MCF 10A (cell line): ENCODE measurements at regions of chr7 and their contacts with region 1.

Region 1: GRCh38 chr7:44797329-44798251 is 1.1 kb downstream of the PPIA start:
- DNase-seq: peak; percentile 90
- H3K4me3 Mint-ChIP-seq: peak overlapping the region; percentile 87
- H3K27ac Mint-ChIP-seq: peak overlapping the region; percentile 98
- H3K4me1 Mint-ChIP-seq: peaks cover 6% of the 10 kb centered on the region
- H3K27me3 Mint-ChIP-seq: no peaks in the 10 kb centered on the region
- CTCF ChIP-seq: peak; percentile 42

Region 2: DNA sequence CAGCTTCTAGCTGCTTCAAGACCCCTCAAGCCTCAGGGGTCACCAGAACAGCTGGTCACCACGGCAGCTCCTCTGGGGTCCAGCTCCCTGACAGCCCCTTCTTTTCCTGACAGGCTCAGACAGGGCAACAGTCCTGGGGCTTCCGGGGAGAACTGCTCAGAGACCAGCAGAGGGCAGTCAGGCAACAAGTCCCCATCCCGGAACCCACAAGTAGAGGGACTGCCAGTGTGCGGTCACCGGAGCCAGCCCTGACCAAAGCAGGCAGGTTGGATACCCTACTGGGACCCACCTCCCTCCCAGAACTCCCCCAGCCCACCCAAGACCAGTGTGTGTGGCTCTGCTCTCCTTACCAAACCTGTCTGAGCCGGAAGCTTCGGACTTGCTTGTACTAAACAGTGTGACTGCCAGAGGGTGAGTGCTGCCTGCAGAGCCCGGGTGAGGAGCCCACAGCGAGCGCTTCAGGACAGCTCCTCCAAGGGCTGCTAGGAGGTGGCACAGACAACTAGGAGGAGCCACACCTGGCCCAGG is 556.5 kb before region 1 on chr7:
- CTCF ChIA-PET with region 1: no interaction called
- POLR2A ChIA-PET with region 1: no interaction called
- intact Hi-C with region 1: no loop called
- DNase-seq: peak; percentile 85
- H3K4me3 Mint-ChIP-seq: no peak overlapping the region
- H3K27ac Mint-ChIP-seq: peak overlapping the region; percentile 27
- H3K4me1 Mint-ChIP-seq: peaks cover 7% of the 10 kb centered on the region
- H3K27me3 Mint-ChIP-seq: no peaks in the 10 kb centered on the region
- CTCF ChIP-seq: peak; percentile 83

Region 3: GRCh38 chr7:44587843-44588711 is 209.5 kb before region 1 on chr7:
- CTCF ChIA-PET with region 1: no interaction called
- POLR2A ChIA-PET with region 1: interaction called, 6 read pairs
- intact Hi-C with region 1: loop called (anchors 2 kb)
- DNase-seq: peak; percentile 76
- H3K4me3 Mint-ChIP-seq: no peak overlapping the region
- H3K27ac Mint-ChIP-seq: no peak overlapping the region
- H3K4me1 Mint-ChIP-seq: peaks cover 7% of the 10 kb centered on the region
- H3K27me3 Mint-ChIP-seq: peaks cover 6% of the 10 kb centered on the region
- CTCF ChIP-seq: peak; percentile 72

Region 4: DNA sequence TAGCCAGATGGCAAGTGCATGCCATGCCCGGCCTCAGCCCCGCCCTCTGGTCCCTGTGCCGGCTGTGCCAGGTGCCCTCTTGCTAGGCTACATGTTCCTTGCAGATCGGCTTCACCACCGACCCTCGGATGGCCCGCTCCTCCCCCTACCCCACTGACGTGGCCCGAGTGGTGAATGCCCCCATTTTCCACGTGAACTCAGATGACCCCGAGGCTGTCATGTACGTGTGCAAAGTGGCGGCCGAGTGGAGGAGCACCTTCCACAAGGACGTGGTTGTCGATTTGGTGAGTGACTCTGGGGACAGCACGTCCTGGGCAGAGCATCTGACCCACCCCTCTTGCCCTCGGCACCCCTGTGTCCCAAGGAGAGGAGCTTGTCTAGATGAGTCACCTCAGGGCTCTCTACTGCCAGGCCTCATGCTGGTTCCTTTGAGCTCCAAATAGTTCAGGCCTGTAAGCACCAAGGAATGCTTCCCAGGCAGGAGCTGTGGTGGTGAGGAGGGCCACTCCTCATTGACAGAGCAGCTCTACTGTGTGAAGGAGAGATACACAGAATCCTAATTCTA is 103.8 kb before region 1 on chr7:
- CTCF ChIA-PET with region 1: interaction called, 3 read pairs
- POLR2A ChIA-PET with region 1: no interaction called
- intact Hi-C with region 1: loop called (anchors 10 kb)
- DNase-seq: peak; percentile 63
- H3K4me3 Mint-ChIP-seq: no peak overlapping the region
- H3K27ac Mint-ChIP-seq: peak overlapping the region; percentile 92
- H3K4me1 Mint-ChIP-seq: peaks cover 8% of the 10 kb centered on the region
- H3K27me3 Mint-ChIP-seq: no peaks in the 10 kb centered on the region
- CTCF ChIP-seq: no peak

Region 5: DNA sequence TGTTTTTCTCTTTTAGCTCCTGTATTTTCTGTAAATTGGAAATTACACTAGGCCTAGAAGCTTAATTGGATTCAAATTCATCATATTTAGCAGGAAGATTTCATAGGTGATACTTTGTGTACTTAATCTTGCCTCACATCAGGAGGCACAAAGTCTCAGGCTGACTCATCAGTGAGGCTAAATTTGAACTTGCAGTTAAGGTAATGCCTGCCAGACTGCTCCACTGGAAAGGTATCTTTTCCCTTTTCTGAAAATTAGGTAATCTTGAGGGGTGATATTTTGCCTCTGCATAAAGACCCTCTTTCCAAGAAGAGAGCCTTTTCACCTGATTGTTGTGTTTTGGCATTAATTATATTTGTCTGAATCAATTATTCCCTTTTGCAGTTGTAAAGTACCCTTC is 13.5 kb after region 1 on chr7:
- CTCF ChIA-PET with region 1: interaction called, 5 read pairs
- POLR2A ChIA-PET with region 1: interaction called, 12 read pairs
- intact Hi-C with region 1: no loop called
- DNase-seq: peak; percentile 68
- H3K4me3 Mint-ChIP-seq: no peak overlapping the region
- H3K27ac Mint-ChIP-seq: no peak overlapping the region
- H3K4me1 Mint-ChIP-seq: no peaks in the 10 kb centered on the region
- H3K27me3 Mint-ChIP-seq: no peaks in the 10 kb centered on the region
- CTCF ChIP-seq: no peak